Ovary (tissue), 10 donors: ENCODE measurements at regions of chr12 and their contacts with region 1.

Region 1: DNA sequence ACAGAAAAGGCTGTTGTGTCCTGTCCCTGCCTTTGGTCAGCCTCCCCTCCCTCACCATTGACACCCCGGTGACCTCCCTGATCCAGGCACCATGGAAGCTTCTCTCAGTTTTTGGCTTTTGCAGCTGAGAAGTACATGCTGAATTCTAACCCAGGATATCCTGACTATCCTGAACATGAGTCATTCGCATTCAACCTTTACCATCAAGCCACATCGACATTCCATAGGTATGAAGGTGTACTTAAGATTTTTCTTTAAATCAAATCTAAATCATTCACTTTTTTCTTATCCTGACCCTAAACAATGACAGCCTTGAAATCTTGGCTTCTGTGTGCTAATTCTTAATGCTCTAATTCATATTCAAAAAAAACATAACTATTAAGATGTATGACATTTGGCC is 8.7 kb upstream of the KRT78 start:
- DNase-seq: no peak
- H3K4me3 ChIP-seq: no peak overlapping the region
- H3K27ac ChIP-seq: no peak overlapping the region
- H3K4me1 ChIP-seq: no peaks in the 10 kb centered on the region
- H3K27me3 ChIP-seq: no peaks in the 10 kb centered on the region
- CTCF ChIP-seq: no peak
- EP300 ChIP-seq: no peak
- POLR2A ChIP-seq: no peak

Region 2: GRCh38 chr12:52573306-52573705 is 284.2 kb before region 1 on chr12:
- intact Hi-C with region 1: loop called in 1 of 4 experiments (anchors 5 kb)
- DNase-seq: no peak
- H3K4me3 ChIP-seq: no peak overlapping the region
- H3K27ac ChIP-seq: no peak overlapping the region
- H3K4me1 ChIP-seq: no peaks in the 10 kb centered on the region
- H3K27me3 ChIP-seq: no peaks in the 10 kb centered on the region
- CTCF ChIP-seq: no peak
- EP300 ChIP-seq: no peak
- POLR2A ChIP-seq: no peak